GM12878 (cell line): ENCODE measurements at regions of chr11 and their contacts with region 1.

Region 1: DNA sequence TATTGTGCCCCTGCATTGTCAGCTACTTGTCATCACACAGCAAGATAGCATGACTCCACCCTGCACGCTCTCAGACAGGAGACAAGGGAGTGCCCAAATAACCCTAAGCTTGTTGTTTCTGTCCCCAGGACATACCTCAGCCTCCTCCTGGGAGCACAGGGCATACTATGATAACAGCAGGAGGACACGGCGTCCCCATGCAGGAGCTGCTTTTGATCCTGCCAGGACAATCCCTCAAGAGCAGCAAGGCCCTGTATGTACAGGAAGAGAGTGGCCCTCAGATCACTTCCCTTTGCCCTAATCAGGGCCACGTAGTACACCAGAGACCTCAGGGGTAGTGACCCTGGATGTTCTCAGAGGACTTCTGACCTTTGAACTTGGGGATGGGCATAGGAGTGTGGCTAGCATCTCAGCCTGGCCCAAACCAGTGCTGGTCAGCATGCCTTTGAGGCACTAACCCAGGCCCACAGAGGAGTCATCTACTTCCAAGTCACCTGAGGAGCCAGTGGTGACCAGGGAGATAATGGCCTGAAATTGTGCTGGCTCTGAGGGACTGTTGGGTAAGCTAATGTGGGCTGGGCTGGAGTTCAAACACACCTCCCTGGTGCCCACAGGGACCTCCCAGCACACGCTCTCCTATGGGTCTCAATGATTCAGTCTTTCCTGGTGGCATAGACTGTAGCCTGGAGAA is 9.2 kb downstream of the APOA4 start:
- DNase-seq: no peak
- ATAC-seq: no peak
- H3K4me3 ChIP-seq: no peak overlapping the region
- H3K27ac ChIP-seq: no peak overlapping the region
- H3K4me1 ChIP-seq: no peaks in the 10 kb centered on the region
- H3K27me3 ChIP-seq: no peaks in the 10 kb centered on the region
- CTCF ChIP-seq: no peak
- EP300 ChIP-seq: no peak
- POLR2A ChIP-seq: no peak
- RAD21 ChIP-seq: no peak

Region 2: GRCh38 chr11:116772443-116773202 is 41.3 kb before region 1 on chr11 and contains the start of gene BUD13:
- CTCF ChIA-PET with region 1: no interaction called
- POLR2A ChIA-PET with region 1: interaction called, 10 read pairs
- RAD21 ChIA-PET with region 1: no interaction called
- SMC1A ChIA-PET with region 1: no interaction called
- in situ Hi-C with region 1: no loop called
- intact Hi-C with region 1: no loop called
- DNase-seq: peak; percentile 60
- ATAC-seq: peak; percentile 92
- H3K4me3 ChIP-seq: peak within 1 kb of the TSS; percentile 82
- H3K27ac ChIP-seq: peak within 1 kb of the TSS; percentile 80
- H3K4me1 ChIP-seq: peaks cover 3% of the 10 kb centered on the region; the same call in 1 of the 2 replicates
- H3K27me3 ChIP-seq: no peaks in the 10 kb centered on the region
- CTCF ChIP-seq: no peak; a peak in 1 of 6 replicates
- EP300 ChIP-seq: no peak
- POLR2A ChIP-seq: peak; percentile 92
- RAD21 ChIP-seq: no peak
- polyA plus RNA-seq, gene BUD13: 10.9 to 15.8 TPM

Region 3: DNA sequence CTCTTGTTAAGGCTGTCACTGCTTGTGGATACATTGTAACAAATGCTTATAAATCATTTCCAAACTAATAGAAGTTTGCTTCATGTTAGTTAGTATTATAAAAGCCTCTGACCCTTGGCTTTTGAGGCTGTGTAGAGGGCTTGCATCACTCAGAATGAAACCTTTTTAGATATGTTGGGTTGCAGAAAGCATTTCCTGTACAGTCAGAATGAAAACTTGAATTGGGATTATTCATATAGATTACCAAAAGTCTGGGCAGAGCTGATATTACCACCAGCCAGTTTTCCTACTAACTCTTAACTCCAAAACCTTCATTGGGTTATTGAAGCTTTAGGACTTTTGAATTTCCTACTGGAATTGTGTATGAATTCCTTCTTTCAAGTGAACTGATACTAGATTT is 1634.4 kb after region 1 on chr11:
- CTCF ChIA-PET with region 1: no interaction called
- POLR2A ChIA-PET with region 1: no interaction called
- RAD21 ChIA-PET with region 1: no interaction called
- SMC1A ChIA-PET with region 1: no interaction called
- in situ Hi-C with region 1: no loop called
- intact Hi-C with region 1: no loop called
- DNase-seq: peak; percentile 67
- ATAC-seq: peak; percentile 88
- H3K4me3 ChIP-seq: no peak overlapping the region
- H3K27ac ChIP-seq: peak overlapping the region; percentile 65; the same call in 1 of the 2 replicates
- H3K4me1 ChIP-seq: peaks cover 27% of the 10 kb centered on the region
- H3K27me3 ChIP-seq: no peaks in the 10 kb centered on the region
- CTCF ChIP-seq: no peak
- EP300 ChIP-seq: peak; percentile 41 to 91; a peak in 3 of 4 replicates
- POLR2A ChIP-seq: no peak
- RAD21 ChIP-seq: no peak